PC-3 (cell line): ENCODE measurements at regions of chr4 and their contacts with region 1.

Region 1: DNA sequence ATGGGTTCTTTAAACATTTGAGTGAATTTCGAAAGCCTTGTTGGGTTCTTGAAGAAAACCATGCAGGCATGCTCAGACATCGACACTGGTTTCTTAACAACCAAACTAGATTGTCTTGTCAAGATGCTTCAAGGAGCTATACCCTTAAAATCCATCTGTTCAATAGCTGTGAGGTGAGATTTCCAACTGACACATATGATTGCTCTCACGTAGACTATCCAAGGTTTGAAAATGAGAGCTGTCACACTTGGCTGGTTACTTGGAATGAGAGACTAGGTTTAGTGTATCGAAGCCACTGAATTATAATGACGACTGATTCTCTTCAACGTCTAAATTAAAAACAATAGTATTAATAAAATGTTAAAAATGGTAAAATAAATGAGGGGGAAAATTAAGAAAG is 2725.5 kb downstream of the ARAP2 start:
- DNase-seq: no peak
- ATAC-seq: no peak
- H3K4me3 ChIP-seq: no peak overlapping the region
- H3K27ac ChIP-seq: no peak overlapping the region
- H3K4me1 ChIP-seq: no peaks in the 10 kb centered on the region
- H3K27me3 ChIP-seq: no peaks in the 10 kb centered on the region
- CTCF ChIP-seq: no peak

Region 2: GRCh38 chr4:32798471-32799159 is 720.2 kb before region 1 on chr4:
- CTCF ChIA-PET with region 1: no interaction called
- POLR2A ChIA-PET with region 1: no interaction called
- intact Hi-C with region 1: no loop called
- DNase-seq: no peak
- ATAC-seq: no peak
- H3K4me3 ChIP-seq: no peak overlapping the region
- H3K27ac ChIP-seq: no peak overlapping the region
- H3K4me1 ChIP-seq: no peaks in the 10 kb centered on the region
- H3K27me3 ChIP-seq: no peaks in the 10 kb centered on the region
- CTCF ChIP-seq: no peak

Region 3: DNA sequence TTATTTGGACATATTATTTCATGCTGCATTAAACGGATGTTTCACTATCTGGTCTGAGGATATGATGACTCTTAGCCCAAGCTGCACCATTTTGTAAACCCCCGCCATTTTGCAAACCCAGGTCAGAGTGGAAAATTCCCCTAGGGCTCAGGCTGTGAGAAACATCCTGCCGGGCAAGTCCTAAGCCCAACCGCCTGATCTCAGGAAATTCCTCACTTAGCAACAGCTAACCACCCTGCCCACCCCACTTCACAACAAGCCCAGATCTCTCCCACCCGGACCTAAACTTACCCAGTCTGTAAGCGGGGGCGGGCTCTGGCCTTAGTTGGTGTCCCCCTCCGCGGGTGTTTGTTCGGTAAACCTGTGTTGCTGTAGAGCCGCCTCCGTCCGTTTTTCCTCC is 51.6 kb before region 1 on chr4:
- CTCF ChIA-PET with region 1: no interaction called
- POLR2A ChIA-PET with region 1: no interaction called
- intact Hi-C with region 1: loop called (anchors 10 kb)
- DNase-seq: no peak
- ATAC-seq: no peak
- H3K4me3 ChIP-seq: no peak overlapping the region
- H3K27ac ChIP-seq: no peak overlapping the region
- H3K4me1 ChIP-seq: no peaks in the 10 kb centered on the region
- H3K27me3 ChIP-seq: no peaks in the 10 kb centered on the region
- CTCF ChIP-seq: no peak